HEK293 (cell line): ENCODE measurements at regions of chr17 and their contacts with region 1.

Region 1: GRCh38 chr17:39244600-39245570 is 19.1 kb upstream of the STAC2 start:
- H3K4me3 ChIP-seq: no peak overlapping the region
- H3K27ac ChIP-seq: no peak overlapping the region
- H3K4me1 ChIP-seq: no peaks in the 10 kb centered on the region; the same call in 1 of the 2 replicates
- CTCF ChIP-seq: peak; percentile 91

Region 2: DNA sequence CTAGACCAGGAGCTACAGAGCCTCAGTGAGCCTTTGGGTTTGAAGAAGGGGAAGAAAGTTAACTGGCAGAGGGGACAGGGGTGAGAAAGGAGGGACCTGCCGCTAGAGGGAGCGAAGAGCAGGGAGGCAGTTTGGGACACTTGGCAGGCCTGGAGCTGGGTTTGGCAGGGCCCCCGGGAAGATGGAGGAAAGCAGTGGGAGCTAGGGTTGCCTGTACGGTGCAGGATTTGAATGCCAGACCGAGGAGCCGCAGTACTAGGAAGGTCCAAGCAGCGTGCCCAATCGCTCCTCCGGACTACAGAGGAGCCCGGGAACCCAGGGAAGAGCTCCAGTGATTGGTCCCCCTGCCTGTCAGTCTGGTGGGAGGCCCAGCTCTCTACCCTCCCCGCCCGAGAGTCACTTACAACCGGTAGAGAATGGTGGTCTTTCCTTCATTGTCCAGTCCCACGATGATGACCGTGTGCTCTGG is 80.2 kb before region 1 on chr17:
- CTCF ChIA-PET with region 1: interaction called, 28 read pairs
- POLR2A ChIA-PET with region 1: no interaction called
- H3K4me3 ChIP-seq: no peak overlapping the region
- H3K27ac ChIP-seq: no peak overlapping the region
- H3K4me1 ChIP-seq: 0 out of 2 replicates have a peak, but pooled peaks cover 4% of the 10 kb centered on the region
- CTCF ChIP-seq: peak; percentile 90

Region 3: DNA sequence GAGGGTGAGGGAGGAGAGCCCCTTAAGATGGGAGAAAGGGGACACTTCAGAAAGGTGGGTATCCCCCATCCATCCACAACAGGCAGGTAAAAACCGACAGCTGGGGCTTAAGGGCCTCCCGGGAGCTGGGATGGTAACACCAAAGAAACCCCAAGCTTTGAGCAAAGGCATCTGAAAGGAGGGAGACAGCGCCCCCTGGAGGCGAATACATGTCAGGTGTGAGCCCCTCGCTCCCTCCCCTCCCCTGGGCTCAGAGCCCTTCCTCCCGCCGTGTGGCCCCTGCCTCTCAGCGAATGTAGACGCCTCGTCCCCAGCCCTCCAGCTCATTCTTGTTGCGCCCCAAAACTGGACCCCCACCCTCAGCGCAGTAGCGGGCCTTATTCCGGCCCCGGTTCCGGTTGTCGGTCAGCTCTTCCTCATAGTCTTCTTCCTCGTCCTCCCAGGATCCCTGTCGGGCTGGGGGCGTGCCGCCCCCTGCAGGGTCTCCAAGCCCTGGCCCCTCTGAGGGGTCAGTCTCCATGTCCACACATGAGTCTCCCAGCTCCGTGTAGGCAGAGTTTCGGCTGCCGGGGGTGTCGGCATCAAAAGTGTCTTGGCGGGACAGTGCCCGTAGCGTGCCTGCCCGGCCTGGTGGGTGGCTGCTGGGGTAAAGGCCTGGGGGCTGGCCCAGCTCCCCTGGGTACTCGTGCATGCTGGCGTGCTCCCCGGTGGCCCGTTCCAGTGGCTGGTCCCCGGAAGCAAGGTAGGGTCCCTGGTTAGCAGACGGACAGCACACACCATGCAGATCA is 69.8 kb before region 1 on chr17:
- CTCF ChIA-PET with region 1: interaction called, 10 read pairs
- POLR2A ChIA-PET with region 1: interaction called, 3 read pairs
- H3K4me3 ChIP-seq: no peak overlapping the region
- H3K27ac ChIP-seq: peak overlapping the region; percentile 11; the same call in 1 of the 2 replicates
- H3K4me1 ChIP-seq: 0 out of 2 replicates have a peak, but pooled peaks cover 7% of the 10 kb centered on the region
- CTCF ChIP-seq: peak; percentile 78

Region 4: GRCh38 chr17:39209317-39210092 is 35.4 kb before region 1 on chr17:
- CTCF ChIA-PET with region 1: interaction called, 733 read pairs
- POLR2A ChIA-PET with region 1: interaction called, 72 read pairs
- H3K4me3 ChIP-seq: peak overlapping the region; percentile 13
- H3K27ac ChIP-seq: peak overlapping the region; percentile 28; the same call in 1 of the 2 replicates
- H3K4me1 ChIP-seq: peaks cover 16% of the 10 kb centered on the region
- CTCF ChIP-seq: no peak

Region 5: DNA sequence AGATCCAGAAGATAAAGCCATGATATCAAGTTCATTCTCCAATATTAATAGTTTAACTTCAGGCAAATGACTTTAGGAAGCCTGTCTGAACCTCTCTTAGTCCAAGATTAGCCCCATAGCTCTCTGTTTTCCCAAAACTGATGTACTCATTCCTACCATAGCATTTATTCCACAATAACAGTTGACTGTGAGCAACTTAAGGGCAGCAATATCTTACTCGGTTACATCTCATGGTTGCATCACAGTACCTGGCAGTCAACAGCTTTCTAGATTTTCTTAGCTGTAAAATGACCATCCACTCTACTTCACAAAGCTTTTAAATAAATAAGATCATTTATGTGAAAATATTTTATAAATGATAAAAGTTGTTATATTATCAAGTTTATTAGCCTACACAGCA is 39.0 kb after region 1 on chr17:
- CTCF ChIA-PET with region 1: interaction called, 15 read pairs
- POLR2A ChIA-PET with region 1: no interaction called
- H3K4me3 ChIP-seq: no peak overlapping the region
- H3K27ac ChIP-seq: no peak overlapping the region
- H3K4me1 ChIP-seq: peaks cover 13% of the 10 kb centered on the region
- CTCF ChIP-seq: no peak

Region 6: GRCh38 chr17:39352511-39352910 is 107.6 kb after region 1 on chr17:
- CTCF ChIA-PET with region 1: interaction called, 14 read pairs
- POLR2A ChIA-PET with region 1: interaction called, 8 read pairs
- H3K4me3 ChIP-seq: no peak overlapping the region
- H3K27ac ChIP-seq: no peak overlapping the region
- H3K4me1 ChIP-seq: 0 out of 2 replicates have a peak, but pooled peaks cover 2% of the 10 kb centered on the region
- CTCF ChIP-seq: no peak

Region 7: DNA sequence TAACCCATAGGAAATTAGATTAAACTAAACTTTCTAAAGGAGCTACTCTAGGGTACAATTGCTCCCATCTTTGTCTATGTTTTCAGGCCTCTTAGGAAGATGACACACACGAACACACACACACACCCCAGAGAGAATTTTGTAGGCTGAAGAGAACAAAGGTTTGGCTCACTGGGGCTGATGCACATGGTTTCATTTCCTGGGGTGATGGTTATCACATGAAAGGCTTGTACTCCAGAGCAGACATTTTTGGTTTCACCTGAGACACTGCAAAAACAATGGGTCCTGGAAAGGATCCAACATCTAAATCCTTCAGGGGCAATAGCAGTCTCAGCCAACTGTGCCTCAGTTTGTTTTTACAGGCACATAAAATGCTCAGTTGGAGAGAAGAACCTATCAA is 555.7 kb after region 1 on chr17:
- CTCF ChIA-PET with region 1: interaction called, 11 read pairs
- POLR2A ChIA-PET with region 1: no interaction called
- H3K4me3 ChIP-seq: no peak overlapping the region
- H3K27ac ChIP-seq: peak overlapping the region; percentile 98
- H3K4me1 ChIP-seq: peaks cover 30% of the 10 kb centered on the region
- CTCF ChIP-seq: no peak